OCI-LY7 (cell line): ENCODE measurements at regions of chr20 and their contacts with region 1.

Region 1: DNA sequence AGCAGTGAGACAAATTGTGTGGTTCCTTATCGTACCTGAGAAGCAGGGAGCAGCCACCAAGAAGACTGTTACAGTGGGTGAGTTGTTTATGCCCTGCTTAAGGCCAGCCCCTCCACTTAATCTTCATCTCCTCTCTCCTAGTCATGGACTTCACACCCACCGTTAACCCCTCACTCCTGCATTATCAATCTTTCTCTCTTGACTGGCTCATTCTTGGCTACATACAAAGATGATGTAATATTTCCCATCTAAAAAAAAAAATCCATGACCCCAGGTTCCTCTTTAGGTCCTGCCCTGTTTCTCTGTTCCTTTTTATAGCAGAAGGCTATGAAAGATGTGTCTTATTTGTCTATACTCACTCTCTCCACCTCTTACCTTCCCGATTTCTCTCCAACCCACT is 72.4 kb downstream of the SHLD1 start:
- DNase-seq: peak; percentile 53
- H3K4me3 ChIP-seq: no peak overlapping the region
- H3K27ac ChIP-seq: peak overlapping the region; percentile 57
- H3K4me1 ChIP-seq: peaks cover 29% of the 10 kb centered on the region
- CTCF ChIP-seq: no peak

Region 2: GRCh38 chr20:5297280-5298004 is 525.1 kb before region 1 on chr20:
- CTCF ChIA-PET with region 1: no interaction called
- POLR2A ChIA-PET with region 1: no interaction called
- intact Hi-C with region 1: no loop called
- DNase-seq: no peak
- H3K4me3 ChIP-seq: no peak overlapping the region
- H3K27ac ChIP-seq: no peak overlapping the region
- H3K4me1 ChIP-seq: no peaks in the 10 kb centered on the region
- CTCF ChIP-seq: no peak

Region 3: GRCh38 chr20:5797843-5798462 is 24.6 kb before region 1 on chr20:
- CTCF ChIA-PET with region 1: no interaction called
- POLR2A ChIA-PET with region 1: interaction called, 14 read pairs
- intact Hi-C with region 1: no loop called
- DNase-seq: peak; percentile 98
- H3K4me3 ChIP-seq: peak overlapping the region; percentile 14
- H3K27ac ChIP-seq: peak overlapping the region; percentile 97
- H3K4me1 ChIP-seq: peaks cover 95% of the 10 kb centered on the region
- CTCF ChIP-seq: no peak